Activated T-helper 1 cell treated with anti-CD3 and anti-CD28 coated beads, Interleukin-12 subunit alpha, Interleukin-12 subunit beta, Interleukin-2, Interleukin-4 antibody, amounts not matched to agents 30 ng/mL and 10 ng/mL and 1 ng/mL, durations not matched to agents 14 hours and 24 hours and 36 hours (primary cell): ENCODE measurements at regions of chrX and their contacts with region 1.

Region 1: DNA sequence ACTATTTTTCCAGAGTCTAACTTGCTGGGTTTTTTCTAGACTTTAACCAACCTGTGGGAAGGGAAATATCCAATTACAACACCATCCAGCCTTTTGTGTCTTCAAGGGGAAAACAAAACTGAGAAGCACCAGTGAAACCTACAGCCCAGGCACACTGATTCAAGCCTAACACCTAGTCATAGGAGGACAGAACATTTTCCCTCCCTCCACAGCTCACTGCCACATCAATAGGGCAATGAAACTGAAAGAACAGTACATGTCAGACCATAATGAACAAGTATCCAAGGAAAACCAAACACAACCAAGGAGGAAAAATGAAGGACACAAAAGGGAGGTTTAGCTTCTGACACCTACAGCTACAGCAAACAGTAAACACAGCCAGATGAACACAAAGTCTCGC is 17.6 kb downstream of the MAGEA8 start:
- DNase-seq: no peak
- H3K4me3 Mint-ChIP-seq: no peak overlapping the region
- H3K27ac Mint-ChIP-seq: peak overlapping the region; percentile 84
- H3K4me1 Mint-ChIP-seq: peaks cover 10% of the 10 kb centered on the region
- H3K27me3 Mint-ChIP-seq: no peaks in the 10 kb centered on the region

Region 2: DNA sequence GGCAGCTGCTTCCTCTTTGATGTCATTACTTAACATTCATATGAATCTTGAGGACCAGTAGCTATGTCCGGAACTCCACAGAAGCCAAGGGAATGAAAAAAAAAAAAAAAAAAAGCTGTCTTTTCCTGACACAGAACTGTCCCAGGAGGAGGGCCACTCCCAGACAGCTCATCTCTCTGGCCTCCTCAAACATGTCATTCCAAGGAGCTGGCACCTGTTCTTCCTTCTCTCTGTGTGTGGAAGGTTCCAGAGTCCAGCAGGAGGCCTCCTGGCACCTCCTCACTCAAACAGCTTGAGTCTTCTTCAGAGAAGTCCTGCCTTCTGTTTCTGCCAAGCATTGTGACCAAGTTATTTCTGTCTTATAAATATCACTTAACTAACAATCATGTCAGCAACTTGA is 939.7 kb before region 1 on chrX:
- intact Hi-C with region 1: no loop called
- DNase-seq: no peak
- H3K4me3 Mint-ChIP-seq: no peak overlapping the region
- H3K27ac Mint-ChIP-seq: no peak overlapping the region
- H3K4me1 Mint-ChIP-seq: no peaks in the 10 kb centered on the region
- H3K27me3 Mint-ChIP-seq: no peaks in the 10 kb centered on the region

Region 3: GRCh38 chrX:149837639-149838038 is 60.9 kb before region 1 on chrX:
- intact Hi-C with region 1: loop called (anchors 2 kb)
- DNase-seq: peak; percentile 3
- H3K4me3 Mint-ChIP-seq: no peak overlapping the region
- H3K27ac Mint-ChIP-seq: peak overlapping the region; percentile 8
- H3K4me1 Mint-ChIP-seq: peaks cover 24% of the 10 kb centered on the region
- H3K27me3 Mint-ChIP-seq: no peaks in the 10 kb centered on the region

Region 4: DNA sequence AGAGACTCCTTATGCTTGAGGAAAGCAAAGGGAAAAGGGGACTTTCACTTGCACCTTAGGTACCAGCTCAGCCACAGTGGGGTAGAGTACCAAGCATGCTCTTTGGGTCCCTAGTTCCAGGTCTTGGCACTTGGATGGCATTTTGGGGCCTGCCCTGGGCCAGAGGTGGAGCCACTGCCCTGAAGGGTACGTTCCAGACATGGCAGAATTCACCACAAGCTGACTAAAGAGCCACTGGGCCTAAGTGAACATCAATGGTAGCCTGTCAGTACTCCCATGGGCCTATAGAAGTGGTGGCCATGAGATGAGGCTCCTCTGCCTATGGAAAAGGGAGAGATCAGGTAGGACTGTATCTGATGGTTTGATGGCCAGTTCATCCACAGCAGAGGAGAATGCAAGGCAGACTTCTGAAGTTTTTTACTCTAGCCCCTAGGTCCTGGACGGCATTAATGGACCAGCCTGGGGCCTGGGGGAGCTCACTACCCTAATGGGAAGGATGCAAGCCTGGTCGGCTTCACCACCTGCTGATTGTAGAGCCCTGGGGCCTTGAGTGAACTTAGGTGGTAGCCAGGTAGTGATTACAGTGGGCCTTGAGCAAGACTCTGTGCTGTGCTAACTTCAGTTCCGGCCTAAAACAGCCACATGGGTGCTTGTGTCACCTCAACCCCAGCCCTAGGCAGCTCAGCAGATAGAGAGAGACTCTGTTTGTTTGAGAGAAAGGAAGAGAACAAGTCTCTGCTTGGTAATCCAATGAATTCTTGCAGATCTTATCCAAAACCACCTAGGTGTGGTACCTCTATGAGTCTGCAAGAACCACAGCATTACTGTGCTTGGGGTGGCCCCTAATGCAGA is 11.0 kb after region 1 on chrX:
- intact Hi-C with region 1: loop called (anchors 1 kb)
- DNase-seq: no peak
- H3K4me3 Mint-ChIP-seq: no peak overlapping the region
- H3K27ac Mint-ChIP-seq: no peak overlapping the region
- H3K4me1 Mint-ChIP-seq: peaks cover 15% of the 10 kb centered on the region
- H3K27me3 Mint-ChIP-seq: no peaks in the 10 kb centered on the region